Activated T-helper 2 cell treated with anti-CD3 and anti-CD28 coated beads, Interferon-gamma antibody, Interleukin-2, Interleukin-4, amounts not matched to agents 10 μg/mL and 5 μg/mL and 100 μg/mL, durations not matched to agents 14 hours and 24 hours and 36 hours (primary cell): ENCODE measurements at regions of chr7 and their contacts with region 1.

Region 1: GRCh38 chr7:104943502-104944343 is 70.3 kb upstream of the KMT2E start:
- DNase-seq: peak; percentile 78
- H3K4me3 Mint-ChIP-seq: peak overlapping the region; percentile 97
- H3K27ac Mint-ChIP-seq: peak overlapping the region; percentile 99
- H3K4me1 Mint-ChIP-seq: peaks cover 50% of the 10 kb centered on the region
- H3K27me3 Mint-ChIP-seq: no peaks in the 10 kb centered on the region

Region 2: DNA sequence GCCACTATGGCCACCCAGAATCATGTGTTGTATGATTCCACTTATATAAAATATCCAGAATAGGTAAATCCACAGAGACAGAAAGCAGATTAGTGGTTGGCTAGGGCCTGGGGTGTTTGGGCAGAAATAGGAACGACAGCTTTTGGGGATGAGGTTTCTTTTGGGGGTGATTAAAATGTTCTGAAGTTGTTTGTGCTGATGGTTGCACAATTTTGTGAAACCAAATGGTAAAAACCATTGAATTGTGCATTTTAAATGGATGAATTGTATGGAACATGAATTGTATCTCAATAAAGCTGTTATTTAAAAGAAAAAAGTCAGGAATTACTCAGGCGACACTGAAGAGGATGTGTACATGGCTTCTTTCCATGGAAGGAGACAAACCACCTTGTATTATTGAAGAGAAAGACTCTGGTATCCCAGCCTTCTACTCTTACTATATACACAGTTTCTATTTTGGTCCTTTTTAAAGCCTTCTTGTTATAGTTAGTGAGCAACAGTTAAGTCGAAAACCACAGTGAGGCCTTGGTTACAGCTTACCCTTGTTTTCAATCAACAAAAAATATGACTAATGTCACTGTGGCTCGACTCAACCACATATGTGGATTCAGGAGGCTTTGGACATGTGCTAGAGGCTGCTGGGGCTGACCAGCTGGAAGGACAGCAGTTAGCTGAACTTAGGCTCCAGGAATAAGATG is 13.2 kb after region 1 on chr7:
- intact Hi-C with region 1: loop called (anchors 1 kb)
- DNase-seq: peak; percentile 48
- H3K4me3 Mint-ChIP-seq: peak overlapping the region; percentile 65
- H3K27ac Mint-ChIP-seq: peak overlapping the region; percentile 100
- H3K4me1 Mint-ChIP-seq: peaks cover 59% of the 10 kb centered on the region
- H3K27me3 Mint-ChIP-seq: no peaks in the 10 kb centered on the region

Region 3: GRCh38 chr7:105346593-105347322 is 403.0 kb after region 1 on chr7:
- intact Hi-C with region 1: loop called (anchors 2 kb)
- DNase-seq: no peak
- H3K4me3 Mint-ChIP-seq: peak overlapping the region; percentile 17
- H3K27ac Mint-ChIP-seq: peak overlapping the region; percentile 47
- H3K4me1 Mint-ChIP-seq: peaks cover 39% of the 10 kb centered on the region
- H3K27me3 Mint-ChIP-seq: no peaks in the 10 kb centered on the region

Region 4: DNA sequence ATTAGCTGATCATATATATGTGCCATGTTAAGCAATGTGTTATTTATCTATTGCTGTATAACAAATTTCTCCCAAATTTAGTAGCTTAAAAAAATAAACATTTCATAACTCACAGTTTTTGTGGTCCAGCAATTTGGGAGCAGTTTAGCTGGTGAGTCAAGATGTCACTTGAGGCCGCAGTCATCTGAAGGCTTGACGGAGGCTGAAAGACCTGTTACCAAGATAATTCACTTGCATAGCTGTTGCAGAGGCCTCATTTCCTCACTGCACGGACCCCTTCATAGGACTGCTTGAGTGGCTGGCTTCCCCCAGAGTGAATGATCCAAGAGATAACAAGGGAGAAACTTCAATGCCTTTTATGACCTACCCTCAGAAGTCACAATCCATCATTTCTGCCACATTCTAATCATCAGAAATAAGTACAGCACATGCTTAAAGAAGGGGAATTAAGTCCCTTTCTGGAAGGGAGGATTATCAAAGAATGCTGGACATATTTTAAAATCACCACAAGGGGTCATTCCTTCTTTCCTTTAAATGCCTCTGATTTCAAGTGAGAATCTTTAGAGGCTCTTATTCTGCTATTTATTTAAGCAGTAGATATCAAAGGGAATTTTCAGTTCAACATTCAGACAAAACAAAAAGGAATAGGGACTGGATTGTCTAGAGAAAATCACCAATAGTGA is 455.5 kb after region 1 on chr7:
- intact Hi-C with region 1: no loop called
- DNase-seq: no peak
- H3K4me3 Mint-ChIP-seq: no peak overlapping the region
- H3K27ac Mint-ChIP-seq: no peak overlapping the region
- H3K4me1 Mint-ChIP-seq: peaks cover 2% of the 10 kb centered on the region
- H3K27me3 Mint-ChIP-seq: no peaks in the 10 kb centered on the region

Region 5: GRCh38 chr7:105531792-105532671 is 588.3 kb after region 1 on chr7 and contains the start of gene RINT1:
- intact Hi-C with region 1: loop called (anchors 2 kb)
- DNase-seq: peak; percentile 86
- H3K4me3 Mint-ChIP-seq: peak within 1 kb of the TSS; percentile 91
- H3K27ac Mint-ChIP-seq: peak within 1 kb of the TSS; percentile 92
- H3K4me1 Mint-ChIP-seq: peaks cover 18% of the 10 kb centered on the region
- H3K27me3 Mint-ChIP-seq: no peaks in the 10 kb centered on the region
- total RNA-seq, gene RINT1: 25.7 and 28.7 TPM in 2 replicates